GM12878 (cell line): ENCODE measurements at regions of chr6 and their contacts with region 1.

Region 1: DNA sequence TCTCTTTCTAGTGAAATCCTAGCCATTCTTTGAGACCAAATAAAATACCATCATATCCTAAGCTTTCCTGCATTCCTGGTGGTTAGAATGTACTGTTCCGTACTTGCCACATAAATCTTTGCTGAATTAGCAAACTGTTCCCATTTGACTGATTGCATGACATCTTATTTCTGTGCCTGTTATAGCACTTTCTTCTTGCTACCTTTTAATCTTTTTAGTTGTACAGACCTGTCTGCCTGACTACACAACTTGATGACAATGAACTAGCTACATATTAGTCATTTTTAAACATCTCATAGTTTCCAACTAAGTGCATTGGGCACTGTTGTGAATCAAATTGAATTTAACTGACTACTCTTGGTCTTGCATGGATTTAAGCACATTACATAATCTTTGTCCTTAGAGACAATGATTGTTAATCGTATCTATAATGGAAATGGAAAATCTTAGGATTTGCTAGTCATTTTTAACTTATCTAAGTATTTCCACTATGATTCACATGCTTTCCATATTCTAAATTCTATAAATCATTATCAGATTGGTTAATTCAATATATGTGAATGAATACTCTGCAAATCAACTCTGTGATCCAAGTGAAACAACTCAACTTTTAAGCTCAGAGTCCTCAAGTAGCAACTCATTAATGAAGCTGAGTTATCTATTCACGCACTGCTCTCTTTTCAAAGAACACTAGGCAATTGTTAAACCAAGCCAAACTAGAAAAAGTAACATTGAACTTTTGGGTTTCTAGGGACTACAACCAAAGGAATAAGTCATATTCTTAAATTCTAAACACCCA is 109.0 kb downstream of the TNFRSF21 start:
- DNase-seq: no peak
- ATAC-seq: no peak
- H3K4me3 ChIP-seq: no peak overlapping the region
- H3K27ac ChIP-seq: no peak overlapping the region
- H3K4me1 ChIP-seq: peaks cover 20% of the 10 kb centered on the region
- H3K27me3 ChIP-seq: no peaks in the 10 kb centered on the region; a peak in 1 of 4 replicates
- CTCF ChIP-seq: no peak
- EP300 ChIP-seq: no peak
- POLR2A ChIP-seq: no peak
- RAD21 ChIP-seq: no peak

Region 2: DNA sequence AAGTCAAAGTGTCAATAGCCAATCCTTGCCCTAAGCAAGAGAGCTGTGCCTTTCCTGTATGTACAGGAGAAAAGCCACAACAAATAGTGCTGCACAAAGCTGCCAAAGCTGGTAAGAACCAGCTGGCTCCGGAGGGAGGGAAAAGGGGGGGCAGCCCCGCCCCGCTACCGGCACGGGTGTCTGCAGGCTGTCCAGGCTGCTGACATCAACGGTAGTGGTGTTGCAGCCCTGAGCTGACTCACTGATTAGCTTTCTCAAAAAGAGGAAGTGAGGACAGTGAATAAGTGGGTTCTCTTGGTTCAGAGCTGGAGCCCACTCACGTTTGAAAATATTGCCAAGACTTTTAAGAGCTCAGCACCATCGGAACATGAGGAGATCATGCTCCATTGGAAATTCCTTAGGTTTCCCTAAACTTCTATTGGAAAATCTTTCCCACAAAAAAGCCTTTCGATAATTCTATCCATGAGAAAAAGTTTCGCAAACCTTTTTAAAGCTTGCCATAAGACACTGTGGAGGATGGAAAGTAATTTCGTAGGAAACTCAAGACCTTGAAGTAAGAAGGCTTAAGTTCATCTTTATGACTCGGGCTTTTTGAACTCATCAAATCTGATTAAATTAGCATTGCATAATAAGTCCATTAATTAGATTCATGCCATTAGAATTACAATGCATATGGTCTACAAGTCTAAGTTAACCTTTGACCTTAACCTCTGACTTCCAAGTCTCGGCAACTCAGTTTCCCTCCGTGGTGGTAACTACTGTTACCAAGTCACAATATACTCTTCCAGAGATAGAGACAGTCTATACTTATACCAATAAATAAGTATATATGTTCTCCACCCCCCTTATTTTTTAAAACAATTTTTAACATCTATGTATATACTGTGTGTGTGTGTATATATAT is 42.0 kb after region 1 on chr6:
- CTCF ChIA-PET with region 1: no interaction called
- POLR2A ChIA-PET with region 1: no interaction called
- RAD21 ChIA-PET with region 1: interaction called, 8 read pairs
- SMC1A ChIA-PET with region 1: interaction called, 4 read pairs
- in situ Hi-C with region 1: no loop called
- intact Hi-C with region 1: loop called (anchors 2 kb)
- DNase-seq: peak; percentile 72
- ATAC-seq: peak; percentile 98
- H3K4me3 ChIP-seq: no peak overlapping the region
- H3K27ac ChIP-seq: peak overlapping the region; percentile 60; the same call in 1 of the 2 replicates
- H3K4me1 ChIP-seq: peaks cover 25% of the 10 kb centered on the region
- H3K27me3 ChIP-seq: no peaks in the 10 kb centered on the region
- CTCF ChIP-seq: no peak
- EP300 ChIP-seq: peak in 1 of 2 experiments; percentile 85; a peak in 2 of 4 replicates
- POLR2A ChIP-seq: no peak
- RAD21 ChIP-seq: no peak

Region 3: DNA sequence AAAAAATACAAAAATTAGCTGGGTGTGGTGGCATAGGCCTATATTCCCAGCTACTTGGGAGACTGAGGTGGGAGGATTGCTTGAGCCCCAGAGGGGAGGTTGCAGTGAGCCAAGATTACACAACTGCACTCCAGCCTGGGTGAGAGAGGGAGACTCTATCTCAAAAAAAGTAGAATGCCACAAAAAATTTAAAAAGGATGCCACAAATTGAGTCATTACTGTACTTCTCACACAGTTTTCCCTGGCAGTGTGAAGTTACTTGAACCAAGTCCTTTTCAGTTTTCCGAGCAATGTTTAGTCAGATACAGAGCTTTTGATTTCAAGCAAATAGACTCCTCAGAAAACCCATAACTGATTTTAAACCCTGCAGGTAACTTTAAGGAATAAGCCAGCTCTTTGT is 55.6 kb after region 1 on chr6:
- CTCF ChIA-PET with region 1: no interaction called
- POLR2A ChIA-PET with region 1: no interaction called
- RAD21 ChIA-PET with region 1: no interaction called
- SMC1A ChIA-PET with region 1: no interaction called
- in situ Hi-C with region 1: no loop called
- intact Hi-C with region 1: no loop called
- DNase-seq: no peak
- ATAC-seq: no peak
- H3K4me3 ChIP-seq: no peak overlapping the region
- H3K27ac ChIP-seq: no peak overlapping the region
- H3K4me1 ChIP-seq: no peaks in the 10 kb centered on the region
- H3K27me3 ChIP-seq: no peaks in the 10 kb centered on the region; a peak in 1 of 4 replicates
- CTCF ChIP-seq: no peak
- EP300 ChIP-seq: no peak
- POLR2A ChIP-seq: no peak
- RAD21 ChIP-seq: no peak

Region 4: GRCh38 chr6:47335466-47335865 is 134.7 kb after region 1 on chr6:
- CTCF ChIA-PET with region 1: no interaction called
- POLR2A ChIA-PET with region 1: no interaction called
- RAD21 ChIA-PET with region 1: no interaction called
- SMC1A ChIA-PET with region 1: no interaction called
- in situ Hi-C with region 1: no loop called
- intact Hi-C with region 1: no loop called
- DNase-seq: peak; percentile 12
- ATAC-seq: peak; percentile 84
- H3K4me3 ChIP-seq: no peak overlapping the region
- H3K27ac ChIP-seq: no peak overlapping the region
- H3K4me1 ChIP-seq: peaks cover 6% of the 10 kb centered on the region
- H3K27me3 ChIP-seq: 0 out of 4 replicates have a peak, but pooled peaks cover 0 to 2% of the 10 kb centered on the region in 2 experiments
- CTCF ChIP-seq: no peak
- EP300 ChIP-seq: no peak
- POLR2A ChIP-seq: no peak
- RAD21 ChIP-seq: no peak